ENCODE measurements at regions of chr7 and their contacts with region 1.

Region 1: GRCh38 chr7:150852371-150852920 is at the start of gene AOC1:
- DNase-seq: no peak
- total RNA-seq, gene AOC1: 0.46 TPM in 1 of 2 donors, not detected in the other

Region 2: GRCh38 chr7:150778738-150779301 is 73.6 kb before region 1 on chr7:
- intact Hi-C with region 1: loop called in 1 of 2 experiments (anchors 10 kb)
- DNase-seq: peak; percentile 94

Region 3: GRCh38 chr7:150867605-150868004 is 15.2 kb after region 1 on chr7:
- intact Hi-C with region 1: no loop called
- DNase-seq: no peak

Region 4: DNA sequence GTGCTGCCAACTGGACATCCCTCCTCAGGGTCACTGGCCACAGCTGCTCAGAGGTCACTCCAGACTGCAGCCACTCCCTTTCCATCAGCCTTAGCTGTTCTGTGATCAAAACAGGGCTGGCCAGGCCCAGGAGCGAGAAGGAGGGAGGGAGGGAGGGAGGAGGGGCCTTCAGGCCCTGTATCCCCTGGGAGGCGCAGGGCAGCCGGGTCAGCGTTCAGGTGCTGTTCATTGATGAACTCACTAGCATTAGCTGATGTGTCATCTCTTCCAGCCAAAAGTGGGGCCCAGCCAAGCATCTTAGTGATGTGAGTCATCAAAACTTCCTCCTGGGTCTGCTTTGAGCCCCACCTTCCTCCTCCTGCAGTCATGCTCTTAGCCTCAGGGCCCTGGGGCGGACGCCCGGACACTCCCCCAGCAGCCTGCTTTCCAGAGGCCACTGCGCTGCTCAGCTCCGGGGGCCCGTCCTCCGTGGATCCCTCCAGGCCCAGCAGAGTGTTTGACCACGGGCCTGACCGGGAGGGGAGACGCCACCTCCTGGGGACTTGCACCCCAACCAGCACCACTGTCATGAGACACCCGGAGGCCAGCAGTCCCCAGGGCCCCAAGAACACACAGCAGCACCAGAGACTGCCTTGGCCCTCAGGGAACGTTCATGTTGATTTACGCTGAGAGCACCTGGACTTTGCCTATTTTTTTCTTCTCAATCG is 875.3 kb after region 1 on chr7:
- intact Hi-C with region 1: no loop called
- DNase-seq: peak; percentile 95

Measured in posterior vena cava (tissue), 2 donors.